ENCODE measurements at regions of chr6 and their contacts with region 1.

Region 1: GRCh38 chr6:28725890-28726348 is 197.9 kb downstream of the TRIM27 start:
- DNase-seq: no peak
- H3K4me3 ChIP-seq: no peak overlapping the region
- H3K27ac ChIP-seq: no peak overlapping the region
- H3K4me1 ChIP-seq: peaks cover 9% of the 10 kb centered on the region
- H3K27me3 ChIP-seq: no peaks in the 10 kb centered on the region
- CTCF ChIP-seq: no peak

Region 2: DNA sequence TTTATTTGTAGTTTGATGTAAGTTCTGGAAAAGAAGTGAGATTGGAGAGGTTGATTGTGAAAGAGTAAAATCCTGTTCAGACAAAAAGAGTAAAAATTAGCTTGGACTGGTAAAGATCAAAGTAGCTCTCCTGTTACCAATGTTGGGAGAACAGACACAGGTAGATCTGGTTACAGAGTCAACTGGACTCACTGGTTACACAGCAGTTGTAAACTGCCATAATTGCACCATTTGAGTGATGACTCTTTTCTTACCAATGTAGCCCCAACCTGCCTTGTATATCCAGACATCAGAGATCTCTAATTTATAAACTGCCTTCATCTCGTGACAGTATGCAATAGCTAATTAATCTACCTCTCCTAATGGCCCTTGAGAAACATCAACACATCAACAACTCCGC is 1644.0 kb before region 1 on chr6:
- CTCF ChIA-PET with region 1: no interaction called
- POLR2A ChIA-PET with region 1: no interaction called
- intact Hi-C with region 1: no loop called
- DNase-seq: peak in 1 of 2 experiments; percentile 35
- H3K4me3 ChIP-seq: no peak overlapping the region
- H3K27ac ChIP-seq: no peak overlapping the region
- H3K4me1 ChIP-seq: 0 out of 2 replicates have a peak, but pooled peaks cover 3% of the 10 kb centered on the region
- H3K27me3 ChIP-seq: no peaks in the 10 kb centered on the region
- CTCF ChIP-seq: no peak

Region 3: DNA sequence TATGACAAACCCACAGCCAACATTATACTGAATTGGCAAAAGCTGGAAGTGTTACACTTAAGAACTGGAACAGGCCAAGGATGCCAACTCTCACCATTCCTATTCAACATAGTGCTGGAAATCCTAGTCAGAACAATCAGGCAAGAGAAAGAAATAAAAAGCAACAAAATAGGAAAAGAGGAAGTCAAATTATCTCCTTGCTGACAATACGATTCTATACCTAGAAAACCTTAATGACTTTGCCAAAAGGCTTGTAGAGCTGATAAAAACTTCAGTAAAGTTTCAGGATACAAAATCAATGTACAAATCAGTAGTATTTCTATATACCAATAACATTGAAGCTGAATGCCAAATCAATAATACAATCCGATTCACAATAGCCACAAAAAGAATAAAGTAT is 610.4 kb after region 1 on chr6:
- CTCF ChIA-PET with region 1: no interaction called
- POLR2A ChIA-PET with region 1: no interaction called
- intact Hi-C with region 1: no loop called
- DNase-seq: no peak
- H3K4me3 ChIP-seq: no peak overlapping the region
- H3K27ac ChIP-seq: no peak overlapping the region
- H3K4me1 ChIP-seq: no peaks in the 10 kb centered on the region
- H3K27me3 ChIP-seq: no peaks in the 10 kb centered on the region
- CTCF ChIP-seq: no peak

Region 4: DNA sequence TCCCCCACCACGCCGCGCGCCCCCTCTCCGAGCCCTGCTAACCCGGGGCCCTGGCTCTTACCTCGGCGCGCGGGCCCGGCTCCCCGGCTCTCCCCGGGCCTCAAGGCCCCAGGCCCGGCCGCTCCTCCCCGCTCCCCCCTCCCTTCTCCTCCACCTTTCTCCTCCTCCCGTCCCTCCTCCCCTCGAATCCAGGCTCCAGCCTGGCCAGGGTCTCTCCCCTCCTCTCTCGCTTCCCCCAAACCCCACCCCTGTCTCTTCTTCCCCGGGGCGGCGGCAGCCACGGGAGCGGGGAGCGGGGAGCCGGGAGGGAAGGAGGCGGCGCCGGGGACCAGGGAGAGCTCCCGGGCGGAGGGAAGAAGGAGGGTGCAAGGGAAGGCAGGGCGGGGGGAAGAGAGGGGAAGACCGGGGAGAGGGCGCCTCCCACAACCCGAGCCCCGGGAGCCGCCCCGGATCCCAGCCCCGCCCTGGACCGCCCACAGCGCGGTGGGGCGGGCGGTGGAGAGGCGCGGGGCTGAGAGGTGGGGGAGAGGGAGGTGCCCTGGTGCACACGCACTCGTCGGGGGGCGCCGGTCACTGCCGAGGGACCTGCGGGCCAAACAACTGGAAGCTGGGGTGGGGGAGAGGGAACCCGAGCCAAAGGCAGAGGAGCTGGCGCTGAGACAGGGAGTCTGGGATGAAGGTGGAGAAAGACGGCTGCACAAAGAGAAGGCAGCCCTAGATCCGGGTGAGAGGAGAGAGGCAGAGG is 907.0 kb after region 1 on chr6 and contains the start of gene GABBR1:
- CTCF ChIA-PET with region 1: no interaction called
- POLR2A ChIA-PET with region 1: interaction called, 21 read pairs
- intact Hi-C with region 1: no loop called
- DNase-seq: peak; percentile 65 to 93
- H3K4me3 ChIP-seq: peak within 1 kb of the TSS; percentile 68
- H3K27ac ChIP-seq: no peak within 1 kb of the TSS
- H3K4me1 ChIP-seq: peaks cover 5% of the 10 kb centered on the region; the same call in 1 of the 2 replicates
- H3K27me3 ChIP-seq: no peaks in the 10 kb centered on the region
- CTCF ChIP-seq: no peak
- total RNA-seq, gene GABBR1: 36.3 and 43.6 TPM in 2 replicates

Measured in PC-9 (cell line).